HepG2 (cell line): ENCODE measurements at regions of chr17 and their contacts with region 1.

Region 1: DNA sequence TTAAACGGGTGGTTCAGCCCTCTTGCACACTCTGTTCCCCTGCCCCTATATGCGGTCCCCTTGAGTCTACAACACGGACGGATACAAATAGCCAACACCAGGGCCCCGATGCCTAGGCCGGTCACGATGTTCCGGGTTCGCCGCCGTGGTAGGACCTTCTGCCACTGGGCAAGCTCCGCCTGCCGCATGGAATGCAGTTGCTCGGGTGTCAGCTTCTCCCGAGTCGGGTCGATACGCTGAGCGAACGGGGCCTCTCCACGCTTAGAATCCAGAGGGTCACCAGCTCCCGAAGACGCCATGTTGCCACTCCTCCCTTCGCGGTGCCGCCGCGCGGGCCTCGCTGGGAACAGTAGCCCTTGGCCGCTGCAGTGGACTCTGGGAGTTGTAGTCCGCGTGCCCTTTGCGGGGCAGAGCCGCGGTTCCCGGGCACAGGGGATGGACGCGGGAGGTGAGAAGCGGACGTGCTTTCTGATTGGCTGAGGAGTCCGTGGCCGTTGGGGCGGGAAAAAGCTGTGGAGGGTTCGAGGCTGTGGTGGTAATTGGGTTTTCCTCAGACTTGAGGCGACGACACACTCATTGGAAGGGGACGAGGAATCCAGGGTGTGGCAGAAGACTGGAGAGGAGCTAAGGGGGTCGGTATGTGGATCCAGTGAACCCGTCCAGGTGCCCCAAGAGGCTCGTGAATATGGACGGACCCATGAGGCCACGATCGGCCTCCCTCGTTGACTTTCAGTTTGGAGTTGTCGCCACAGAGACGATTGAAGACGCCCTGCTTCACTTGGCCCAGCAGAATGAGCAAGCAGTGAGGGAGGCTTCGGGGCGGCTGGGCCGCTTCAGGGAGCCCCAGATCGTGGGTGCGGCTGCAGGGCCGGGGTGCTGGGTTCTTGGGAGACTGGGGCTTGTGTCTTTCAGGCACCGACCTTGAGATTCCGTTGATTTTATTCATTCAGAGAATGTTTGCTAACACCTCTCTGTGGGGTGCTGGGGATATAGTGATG is at the starts of genes CNTD1 and COA3:
- DNase-seq: peak; percentile 88
- ATAC-seq: peak; percentile 89
- H3K4me3 ChIP-seq: peak within 1 kb of the TSS; percentile 88 to 94 (median 94)
- H3K27ac ChIP-seq: peak within 1 kb of the TSS; percentile 88
- H3K4me1 ChIP-seq: peaks cover 58% of the 10 kb centered on the region
- H3K27me3 ChIP-seq: no peaks in the 10 kb centered on the region; a peak in 2 of 5 replicates
- CTCF ChIP-seq: peak; percentile 42
- EP300 ChIP-seq: peak in 1 of 2 experiments; percentile 34; a peak in 1 of 4 replicates
- POLR2A ChIP-seq: peak; percentile 77 to 92
- RAD21 ChIP-seq: peak; percentile 67
- total RNA-seq, gene CNTD1: 0.11 TPM in 1 of 2 replicates, not detected in the other
- total RNA-seq, gene COA3: 202 and 250 TPM in 2 replicates

Region 2: DNA sequence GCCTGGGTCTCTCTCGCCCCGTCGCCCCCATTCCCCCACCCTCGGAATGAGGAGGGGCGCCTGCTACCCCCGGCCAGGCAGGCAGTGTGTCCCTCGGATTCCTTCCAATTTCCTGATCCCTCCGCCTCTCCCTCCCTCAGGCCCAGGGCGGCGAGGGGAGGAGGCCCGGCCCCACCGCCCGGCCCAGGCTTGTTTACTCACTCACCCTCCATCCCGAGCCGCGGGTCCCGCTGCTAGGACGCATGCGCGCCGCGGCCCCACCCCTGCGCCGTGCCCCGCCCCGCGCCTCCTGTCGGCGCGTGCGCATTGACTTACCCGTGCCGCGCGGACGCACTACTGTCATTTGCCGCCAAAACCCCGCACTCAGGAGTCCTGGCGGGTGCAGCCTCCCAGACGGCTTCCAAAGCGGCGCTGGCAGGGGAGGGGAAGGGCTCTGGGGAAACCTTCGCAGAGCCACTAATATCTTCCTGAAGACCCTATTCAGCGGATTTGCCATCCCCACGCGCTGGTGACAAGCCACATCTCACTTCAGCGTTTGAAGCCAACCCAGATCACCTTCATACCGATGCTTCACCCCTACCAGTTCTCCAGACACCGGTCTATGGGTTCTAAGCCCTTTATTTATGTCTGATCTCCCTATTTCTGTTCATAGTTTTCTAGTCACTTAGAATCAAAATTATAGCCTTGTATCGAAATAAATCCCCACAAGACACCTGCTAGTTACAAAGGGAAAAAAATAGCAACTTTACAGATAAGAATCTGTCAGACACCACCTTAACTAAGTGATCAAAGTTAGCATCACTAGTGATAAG is 53.7 kb before region 1 on chr17 and contains the start of gene EZH1:
- CTCF ChIA-PET with region 1: no interaction called
- POLR2A ChIA-PET with region 1: interaction called, 11 read pairs
- in situ Hi-C with region 1: no loop called
- intact Hi-C with region 1: no loop called
- DNase-seq: peak; percentile 91
- ATAC-seq: peak; percentile 89
- H3K4me3 ChIP-seq: peak within 1 kb of the TSS; percentile 58 to 84 (median 76)
- H3K27ac ChIP-seq: peak within 1 kb of the TSS; percentile 83
- H3K4me1 ChIP-seq: peaks cover 62% of the 10 kb centered on the region
- H3K27me3 ChIP-seq: no peaks in the 10 kb centered on the region
- CTCF ChIP-seq: no peak; the same call in 1 of the 2 replicates
- EP300 ChIP-seq: peak; percentile 3 to 45; a peak in 1 of 4 replicates
- POLR2A ChIP-seq: peak; percentile 62 to 64; a peak in 3 of 4 replicates
- RAD21 ChIP-seq: no peak
- total RNA-seq, gene EZH1: 6.0 and 11.6 TPM in 2 replicates